Activated CD4-positive, alpha-beta T cell treated with anti-CD3 and anti-CD28 coated beads for 36 hours (primary cell): ENCODE measurements at regions of chr14 and their contacts with region 1.

Region 1: DNA sequence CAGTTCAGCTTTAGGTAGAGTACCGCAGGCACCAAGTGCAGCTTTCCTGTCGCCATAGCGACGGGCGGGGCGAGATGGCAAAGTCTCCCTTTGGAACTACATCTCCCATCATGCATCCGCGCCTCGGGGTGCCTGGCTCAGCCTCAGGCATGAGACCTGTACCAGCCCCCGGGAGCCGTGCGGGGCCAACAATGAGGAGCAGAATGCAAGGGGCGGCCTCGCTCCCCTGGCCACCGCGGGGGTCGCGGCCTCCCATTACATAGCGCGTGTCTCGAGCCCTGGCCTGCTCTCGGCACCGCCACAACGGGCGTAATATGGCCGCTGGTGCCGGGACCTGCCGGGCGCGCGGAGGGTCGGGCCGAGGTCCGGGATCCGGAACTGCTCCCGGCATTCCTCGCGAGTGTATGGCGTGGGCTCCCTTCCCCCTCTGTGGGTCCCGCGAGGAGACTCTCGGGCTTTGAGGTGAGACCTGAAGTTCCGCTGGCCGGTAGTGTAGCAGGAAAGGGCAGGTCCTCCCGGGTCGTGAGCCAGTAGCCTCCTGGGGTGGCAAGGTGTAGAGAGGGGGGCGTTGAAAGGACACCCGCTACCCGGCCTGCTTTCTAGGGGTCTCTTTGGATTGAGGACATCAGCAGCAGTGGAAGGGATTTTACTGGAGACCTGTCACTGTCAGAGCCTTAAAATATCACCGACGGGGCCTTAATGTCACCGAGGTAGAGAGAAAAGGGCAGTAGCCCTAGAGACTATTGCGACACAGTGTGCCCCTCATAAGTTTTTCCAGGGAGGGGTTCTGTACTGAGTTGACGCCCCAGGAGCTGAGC is at the start of gene THTPA:
- DNase-seq: peak; percentile 96
- ATAC-seq: peak; percentile 83
- H3K4me3 Mint-ChIP-seq: peak within 1 kb of the TSS; percentile 95
- H3K27ac Mint-ChIP-seq: peak within 1 kb of the TSS; percentile 93
- H3K4me1 Mint-ChIP-seq: peaks cover 36% of the 10 kb centered on the region
- H3K27me3 Mint-ChIP-seq: no peaks in the 10 kb centered on the region
- total RNA-seq, gene THTPA: 8.3 to 8.5 TPM

Region 2: GRCh38 chr14:23286020-23286905 is 269.8 kb before region 1 on chr14 and contains the start of gene HOMEZ:
- CTCF ChIA-PET with region 1: no interaction called
- POLR2A ChIA-PET with region 1: no interaction called
- intact Hi-C with region 1: loop called in 1 of 2 experiments (anchors 1 kb)
- DNase-seq: peak; percentile 99
- ATAC-seq: peak; percentile 98
- H3K4me3 Mint-ChIP-seq: peak within 1 kb of the TSS; percentile 99
- H3K27ac Mint-ChIP-seq: peak within 1 kb of the TSS; percentile 95
- H3K4me1 Mint-ChIP-seq: peaks cover 18% of the 10 kb centered on the region
- H3K27me3 Mint-ChIP-seq: no peaks in the 10 kb centered on the region
- total RNA-seq, gene HOMEZ: 13.7 to 17.5 TPM

Region 3: GRCh38 chr14:23469127-23469905 is 86.8 kb before region 1 on chr14 and contains the start of gene NGDN:
- CTCF ChIA-PET with region 1: interaction called, 150 read pairs
- POLR2A ChIA-PET with region 1: no interaction called
- intact Hi-C with region 1: loop called (anchors 1 kb)
- DNase-seq: peak; percentile 95
- ATAC-seq: peak; percentile 97
- H3K4me3 Mint-ChIP-seq: no peak within 1 kb of the TSS
- H3K27ac Mint-ChIP-seq: no peak within 1 kb of the TSS
- H3K4me1 Mint-ChIP-seq: peaks cover 11% of the 10 kb centered on the region
- H3K27me3 Mint-ChIP-seq: no peaks in the 10 kb centered on the region
- total RNA-seq, gene NGDN: 53.0 to 57.8 TPM

Region 4: DNA sequence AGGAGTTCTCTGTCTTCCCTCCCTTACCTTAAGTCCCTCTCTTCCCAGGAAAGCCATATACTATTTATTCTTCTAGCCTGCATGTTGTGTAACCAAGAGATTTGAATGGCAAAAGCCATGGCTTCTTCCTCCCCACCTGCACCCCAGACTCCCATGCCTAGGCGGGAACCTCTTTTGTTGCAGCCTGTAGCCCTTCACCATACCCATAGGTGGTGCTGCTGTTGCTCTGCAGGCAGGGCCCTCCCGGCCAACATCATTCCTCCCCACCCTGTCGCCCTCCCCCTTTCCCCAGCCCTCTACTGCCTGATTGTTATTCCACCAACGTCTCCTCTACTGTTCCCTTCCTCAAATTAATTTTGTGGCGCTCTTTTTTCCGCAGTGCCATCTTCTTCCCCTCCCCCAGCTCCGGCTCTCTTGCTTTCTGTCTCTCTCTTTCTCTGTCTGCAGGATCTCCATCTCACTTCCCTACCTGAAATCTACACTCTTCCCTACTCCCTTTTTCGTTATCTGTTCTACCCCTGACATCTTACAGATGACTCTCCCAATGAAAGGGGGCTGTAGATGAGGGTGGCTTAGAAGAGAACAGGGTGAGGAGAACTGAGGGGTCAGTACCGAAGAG is 72.7 kb before region 1 on chr14:
- CTCF ChIA-PET with region 1: interaction called, 150 read pairs
- POLR2A ChIA-PET with region 1: interaction called, 6 read pairs
- intact Hi-C with region 1: loop called in 1 of 2 experiments (anchors 1 kb)
- DNase-seq: peak; percentile 41
- ATAC-seq: peak; percentile 72
- H3K4me3 Mint-ChIP-seq: no peak overlapping the region
- H3K27ac Mint-ChIP-seq: no peak overlapping the region
- H3K4me1 Mint-ChIP-seq: peaks cover 1% of the 10 kb centered on the region
- H3K27me3 Mint-ChIP-seq: no peaks in the 10 kb centered on the region

Region 5: DNA sequence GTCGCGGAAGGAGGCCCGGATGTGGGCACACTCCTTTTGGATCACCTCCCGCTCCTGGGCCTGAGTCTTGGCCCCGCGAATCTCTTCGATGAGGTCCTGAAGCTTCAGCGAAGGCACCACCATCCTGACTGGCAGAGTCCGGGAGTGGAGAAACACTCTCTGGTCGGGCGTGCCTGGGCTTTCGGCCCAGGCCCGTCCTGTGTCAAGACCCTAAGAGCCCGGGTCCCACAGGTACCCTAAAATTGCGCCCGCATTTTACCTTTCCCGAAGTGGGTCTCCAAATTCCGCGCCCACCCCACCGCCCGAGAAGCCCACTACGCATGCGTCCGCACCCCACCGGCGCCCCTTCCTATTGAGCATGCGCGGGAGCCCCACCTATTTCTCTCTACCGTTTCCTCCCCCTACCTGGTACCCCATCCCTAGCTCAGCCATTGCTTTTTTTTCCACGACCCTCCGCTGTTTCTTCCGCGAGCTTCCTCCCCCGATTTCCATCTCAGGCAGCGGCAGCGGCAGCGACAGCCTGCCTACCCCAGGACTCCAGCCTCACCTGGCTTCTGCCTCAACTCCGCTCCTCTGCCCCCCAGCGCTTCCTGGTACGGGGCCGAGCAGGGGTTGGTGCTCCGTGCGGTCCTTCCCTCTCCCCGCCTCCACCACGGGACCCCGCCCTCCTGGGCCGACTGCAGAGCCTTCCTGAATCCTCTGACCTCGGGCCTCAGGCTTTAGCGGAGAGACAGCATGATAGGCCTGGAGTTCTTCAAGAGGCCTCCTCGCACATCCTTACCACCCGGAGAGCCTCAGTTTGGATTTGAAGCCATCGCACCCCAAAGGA is 11.3 kb after region 1 on chr14 and contains the start of gene AP1G2:
- CTCF ChIA-PET with region 1: interaction called, 43 read pairs
- POLR2A ChIA-PET with region 1: interaction called, 3 read pairs
- intact Hi-C with region 1: loop called in 1 of 2 experiments (anchors 1 kb)
- DNase-seq: peak; percentile 95
- ATAC-seq: peak; percentile 96
- H3K4me3 Mint-ChIP-seq: peak within 1 kb of the TSS; percentile 92
- H3K27ac Mint-ChIP-seq: peak within 1 kb of the TSS; percentile 95
- H3K4me1 Mint-ChIP-seq: peaks cover 23% of the 10 kb centered on the region
- H3K27me3 Mint-ChIP-seq: peaks cover 5% of the 10 kb centered on the region
- total RNA-seq, gene AP1G2: 162 to 166 TPM

Region 6: DNA sequence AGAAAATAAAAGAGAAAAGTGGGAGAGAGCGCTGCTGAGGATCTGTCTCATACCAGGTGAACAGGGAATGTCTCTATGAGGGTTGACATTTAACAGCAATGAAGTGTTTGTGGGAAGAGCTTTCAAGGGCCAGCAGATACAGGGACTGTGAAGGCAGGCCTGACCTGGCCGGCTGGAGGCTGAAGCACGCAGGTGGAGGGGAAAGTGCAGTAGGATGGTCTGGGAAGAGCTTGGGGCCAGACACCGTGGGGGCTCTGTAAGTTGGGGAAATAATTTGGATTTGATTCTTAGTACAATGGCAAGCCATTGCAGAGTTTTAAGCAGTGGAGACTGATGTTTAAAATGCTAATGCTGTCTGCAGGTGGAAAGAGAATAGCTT is 56.3 kb after region 1 on chr14:
- CTCF ChIA-PET with region 1: no interaction called
- POLR2A ChIA-PET with region 1: no interaction called
- intact Hi-C with region 1: no loop called
- DNase-seq: no peak
- ATAC-seq: no peak
- H3K4me3 Mint-ChIP-seq: no peak overlapping the region
- H3K27ac Mint-ChIP-seq: no peak overlapping the region
- H3K4me1 Mint-ChIP-seq: peaks cover 29% of the 10 kb centered on the region
- H3K27me3 Mint-ChIP-seq: no peaks in the 10 kb centered on the region